Caco-2 (cell line): ENCODE measurements at regions of chr12 and their contacts with region 1.

Region 1: DNA sequence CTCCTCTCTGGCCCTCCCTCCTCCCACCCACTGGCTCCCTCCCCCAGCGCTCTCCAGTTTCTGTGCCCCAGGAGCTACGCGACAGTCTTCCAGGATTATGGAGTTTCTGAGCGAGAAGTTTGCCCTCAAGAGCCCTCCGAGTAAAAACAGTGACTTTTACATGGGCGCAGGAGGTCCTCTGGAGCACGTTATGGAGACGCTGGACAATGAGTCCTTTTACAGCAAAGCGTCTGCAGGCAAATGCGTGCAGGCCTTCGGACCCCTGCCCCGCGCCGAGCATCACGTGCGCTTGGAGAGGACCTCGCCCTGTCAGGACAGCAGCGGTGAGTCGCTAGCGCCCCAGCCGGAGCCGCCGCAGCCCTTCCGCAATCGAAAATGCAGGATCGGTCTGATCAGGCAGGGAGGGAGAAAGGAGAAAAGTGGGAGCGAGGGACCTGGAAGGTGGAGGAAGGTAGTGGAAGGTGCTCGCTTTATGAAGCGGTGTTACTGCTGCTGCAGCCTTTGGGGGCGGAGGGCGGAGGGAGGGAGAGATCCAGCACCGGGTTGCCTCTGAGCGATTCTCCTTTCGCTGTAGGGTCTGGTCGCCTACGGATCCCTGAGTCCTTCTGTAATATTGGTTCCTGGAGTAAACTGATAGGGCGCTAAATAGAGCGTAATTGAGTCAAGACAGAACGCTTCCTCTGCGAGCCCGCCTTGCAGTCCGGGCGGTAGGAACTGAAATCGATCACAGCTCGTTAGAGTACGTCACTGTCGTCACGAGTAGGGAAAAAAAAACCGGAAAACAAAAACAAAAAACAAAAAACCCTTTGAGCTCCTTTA is at the start of gene ALX1:
- DNase-seq: peak; percentile 37 to 45
- H3K4me3 ChIP-seq: peak within 1 kb of the TSS; percentile 48
- H3K4me3 Mint-ChIP-seq: peak within 1 kb of the TSS; percentile 73
- H3K27ac Mint-ChIP-seq: no peak within 1 kb of the TSS
- H3K4me1 ChIP-seq: 0 out of 2 replicates have a peak, but pooled peaks cover 8% of the 10 kb centered on the region
- H3K4me1 Mint-ChIP-seq: no peaks in the 10 kb centered on the region
- H3K27me3 ChIP-seq: no peaks in the 10 kb centered on the region
- H3K27me3 Mint-ChIP-seq: peaks cover 10% of the 10 kb centered on the region
- CTCF ChIP-seq: no peak
- total RNA-seq, gene ALX1: not detected in 2 replicates

Region 2: GRCh38 chr12:85225501-85225900 is 54.9 kb before region 1 on chr12:
- CTCF ChIA-PET with region 1: no interaction called
- POLR2A ChIA-PET with region 1: no interaction called
- intact Hi-C with region 1: loop called (anchors 2 kb)
- DNase-seq: no peak
- H3K4me3 ChIP-seq: no peak overlapping the region
- H3K4me3 Mint-ChIP-seq: no peak overlapping the region
- H3K27ac Mint-ChIP-seq: no peak overlapping the region
- H3K4me1 ChIP-seq: no peaks in the 10 kb centered on the region
- H3K4me1 Mint-ChIP-seq: no peaks in the 10 kb centered on the region
- H3K27me3 ChIP-seq: no peaks in the 10 kb centered on the region
- H3K27me3 Mint-ChIP-seq: peaks cover 2% of the 10 kb centered on the region
- CTCF ChIP-seq: no peak

Region 3: GRCh38 chr12:85363382-85364190 is 83.2 kb after region 1 on chr12:
- CTCF ChIA-PET with region 1: no interaction called
- POLR2A ChIA-PET with region 1: no interaction called
- intact Hi-C with region 1: no loop called
- DNase-seq: no peak
- H3K4me3 ChIP-seq: no peak overlapping the region
- H3K4me3 Mint-ChIP-seq: no peak overlapping the region
- H3K27ac Mint-ChIP-seq: no peak overlapping the region
- H3K4me1 ChIP-seq: no peaks in the 10 kb centered on the region
- H3K4me1 Mint-ChIP-seq: peaks cover 13% of the 10 kb centered on the region
- H3K27me3 ChIP-seq: no peaks in the 10 kb centered on the region
- H3K27me3 Mint-ChIP-seq: no peaks in the 10 kb centered on the region
- CTCF ChIP-seq: no peak